ENCODE measurements at regions of chr3 and their contacts with region 1.

Region 1: DNA sequence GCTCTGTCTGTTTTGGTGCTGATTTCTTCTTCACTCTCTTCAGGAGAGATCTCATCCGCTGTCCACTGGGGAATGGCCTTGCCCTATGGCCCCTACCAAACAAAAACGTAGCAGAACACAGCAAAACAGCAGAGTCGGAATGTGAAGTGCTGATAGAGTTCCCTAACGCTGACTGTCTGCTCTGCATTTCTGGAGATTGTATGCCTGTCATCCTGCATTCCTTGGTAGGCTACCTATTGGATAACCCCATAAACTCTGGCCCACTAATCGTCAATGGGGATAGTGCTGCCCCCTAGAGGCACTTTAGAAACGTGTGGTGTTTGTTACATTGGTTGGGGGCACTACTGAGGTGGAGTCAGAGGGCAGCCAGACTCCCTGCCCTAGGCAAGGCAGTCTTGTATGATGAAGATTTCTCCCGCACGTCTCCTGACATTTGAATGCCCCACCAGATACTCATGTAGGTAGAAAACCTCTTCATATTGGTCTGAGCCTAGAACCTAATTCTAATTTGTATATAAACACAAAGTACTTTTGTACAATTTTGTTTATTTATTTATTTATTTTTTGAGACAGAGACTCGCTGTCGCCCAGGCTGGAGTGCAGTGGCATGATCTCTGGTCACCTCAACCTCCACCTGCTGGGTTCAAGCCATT is 15.6 kb upstream of the MAGEF1 start:
- DNase-seq: no peak

Region 2: DNA sequence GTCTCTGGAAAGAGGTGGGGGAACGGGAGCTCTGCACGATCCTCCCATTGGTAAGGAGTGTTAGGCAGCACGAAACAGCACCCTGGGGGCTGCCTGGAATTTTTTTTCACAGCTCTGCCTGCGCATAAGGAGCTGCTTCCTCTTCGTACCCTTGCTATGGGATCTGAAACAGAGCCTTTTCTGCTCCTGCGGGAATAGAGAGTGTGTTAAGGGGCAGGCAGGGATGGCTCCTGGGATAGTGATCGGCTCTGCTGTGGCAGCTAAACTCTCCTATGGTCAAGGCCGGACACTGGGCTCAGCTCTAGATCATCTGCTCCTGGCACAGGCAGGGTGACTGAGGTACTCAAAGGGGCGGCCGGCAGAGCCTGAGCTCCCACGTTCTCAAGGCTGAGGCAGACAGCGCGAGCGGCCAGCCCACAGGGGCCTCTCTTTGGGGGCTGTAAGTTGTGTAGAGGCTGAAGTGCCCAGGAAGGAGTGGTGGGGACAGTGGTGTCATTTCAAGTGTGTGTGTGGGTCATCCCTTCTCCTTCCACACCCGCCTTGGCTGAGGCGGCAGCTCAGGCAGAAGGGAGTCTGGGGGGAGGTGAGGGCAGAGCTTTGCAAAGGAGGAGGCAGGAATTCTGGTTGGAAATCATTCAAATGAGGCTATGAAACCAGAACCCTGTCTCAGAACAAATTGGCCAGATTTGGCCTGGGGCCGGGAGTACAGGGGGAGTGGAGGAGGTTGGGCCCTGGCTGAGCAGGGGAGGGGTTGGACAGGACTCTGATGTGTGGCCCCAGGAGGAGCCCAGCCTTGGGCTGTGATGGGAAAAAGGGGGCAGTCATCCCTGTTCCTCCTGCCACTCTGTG is 134.9 kb before region 1 on chr3:
- intact Hi-C with region 1: no loop called
- DNase-seq: no peak

Region 3: GRCh38 chr3:184711493-184712247 is 15.8 kb before region 1 on chr3 and contains the start of gene MAGEF1:
- intact Hi-C with region 1: no loop called
- DNase-seq: peak; percentile 90
- total RNA-seq, gene MAGEF1: 30.2 TPM

Region 4: DNA sequence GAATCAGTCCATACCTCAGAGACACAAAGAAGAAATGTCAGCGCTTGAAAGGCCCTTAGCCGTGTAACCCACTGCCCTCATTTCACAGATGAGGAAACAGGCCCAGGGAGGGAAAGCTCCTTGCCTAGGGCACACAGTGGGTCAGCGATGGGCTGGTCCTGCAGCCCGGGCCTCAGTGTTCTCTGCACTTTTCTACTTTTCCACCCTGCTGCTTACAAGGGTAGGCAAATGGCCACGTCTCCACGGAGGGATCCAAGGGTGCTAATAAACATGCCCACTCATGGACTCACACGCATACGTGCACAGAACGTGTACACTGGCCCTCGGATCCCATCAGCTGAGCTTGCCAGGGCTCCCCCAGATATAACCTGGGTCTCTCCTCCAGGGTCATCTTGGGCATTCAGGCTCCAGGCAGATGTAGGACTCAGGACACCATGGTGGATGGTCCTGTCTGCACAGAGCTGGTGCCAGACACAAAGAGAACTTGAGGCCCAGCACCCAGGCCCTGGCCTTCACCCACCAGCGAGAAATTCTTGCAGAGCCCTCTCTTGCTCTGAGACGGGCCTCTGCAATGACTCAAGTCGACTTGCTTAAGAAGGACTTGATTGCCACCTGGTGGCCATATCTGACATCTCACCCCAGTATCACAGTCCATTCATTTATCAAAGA is 50.0 kb after region 1 on chr3:
- intact Hi-C with region 1: loop called (anchors 5 kb)
- DNase-seq: peak; percentile 83

Region 5: GRCh38 chr3:184914628-184915027 is 187.1 kb after region 1 on chr3:
- intact Hi-C with region 1: no loop called
- DNase-seq: no peak

Region 6: DNA sequence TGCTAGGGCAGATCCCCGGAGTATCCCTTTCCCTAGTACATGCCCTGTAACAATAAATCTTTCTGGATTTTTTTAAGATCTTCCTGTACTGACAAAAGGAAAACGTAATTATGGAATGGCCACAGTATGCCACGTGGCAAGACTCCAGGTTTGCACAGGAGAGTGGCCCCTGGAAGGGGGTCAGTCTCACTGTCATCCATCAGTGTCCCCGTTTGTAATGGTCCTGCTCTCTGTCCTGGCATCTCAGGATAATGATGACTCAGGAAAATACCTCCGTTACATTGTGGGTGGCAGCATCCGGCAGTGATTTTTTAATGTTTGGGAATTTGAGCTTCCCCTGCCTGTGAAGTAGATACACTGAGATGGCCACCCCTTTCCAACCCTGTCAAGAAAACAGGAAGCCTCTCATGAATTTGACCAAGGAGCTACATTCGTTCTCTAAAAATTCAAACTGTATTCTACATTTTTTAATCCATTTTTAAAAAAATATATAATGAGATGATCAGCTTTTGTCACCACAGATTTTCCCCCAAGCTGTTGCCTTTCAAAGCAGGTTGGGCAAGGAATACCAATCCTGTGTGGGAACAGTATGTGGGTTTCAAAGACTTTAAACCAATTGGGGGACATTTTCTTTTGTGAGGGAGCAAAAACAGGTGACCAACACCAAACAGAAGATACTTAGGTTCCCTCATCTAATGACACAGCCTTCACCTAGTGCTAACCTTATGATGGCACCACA is 315.0 kb after region 1 on chr3:
- intact Hi-C with region 1: no loop called
- DNase-seq: no peak

Measured in cardiac septum (tissue), 1 donor.